ENCODE measurements at regions of chr12 and their contacts with region 1.

Region 1: GRCh38 chr12:49740930-49741881 is at the start of gene TMBIM6:
- DNase-seq: peak; percentile 90
- H3K4me3 ChIP-seq: peak within 1 kb of the TSS; percentile 90 to 94
- H3K27ac ChIP-seq: peak within 1 kb of the TSS; percentile 96 to 98
- H3K4me1 ChIP-seq: peaks cover 13% of the 10 kb centered on the region in 2 experiments
- H3K27me3 ChIP-seq: no peaks in the 10 kb centered on the region
- CTCF ChIP-seq: peak; percentile 94
- EP300 ChIP-seq: no peak
- RAD21 ChIP-seq: peak; percentile 65
- polyA plus RNA-seq, gene TMBIM6: 290 and 360 TPM in 2 replicates

Region 2: GRCh38 chr12:49644620-49644994 is 96.6 kb before region 1 on chr12:
- CTCF ChIA-PET with region 1: interaction called, 22 read pairs
- POLR2A ChIA-PET with region 1: interaction called, 7 read pairs
- DNase-seq: peak; percentile 91
- H3K4me3 ChIP-seq: no peak overlapping the region
- H3K27ac ChIP-seq: peak overlapping the region in 1 of 2 experiments; percentile 6; a peak in 1 of 4 replicates
- H3K4me1 ChIP-seq: peaks cover 0 to 5% of the 10 kb centered on the region in 2 experiments; a peak in 1 of 4 replicates
- H3K27me3 ChIP-seq: no peaks in the 10 kb centered on the region
- CTCF ChIP-seq: peak; percentile 98
- EP300 ChIP-seq: no peak
- RAD21 ChIP-seq: peak; percentile 98

Region 3: GRCh38 chr12:49673446-49674317 is 67.5 kb before region 1 on chr12:
- CTCF ChIA-PET with region 1: interaction called, 10 read pairs
- POLR2A ChIA-PET with region 1: interaction called, 19 read pairs
- DNase-seq: peak; percentile 89
- H3K4me3 ChIP-seq: peak overlapping the region in 1 of 2 experiments; percentile 46; a peak in 2 of 4 replicates
- H3K27ac ChIP-seq: peak overlapping the region; percentile 96 to 98
- H3K4me1 ChIP-seq: peaks cover 34 to 49% of the 10 kb centered on the region in 2 experiments
- H3K27me3 ChIP-seq: no peaks in the 10 kb centered on the region
- CTCF ChIP-seq: peak; percentile 44
- EP300 ChIP-seq: peak; percentile 17 to 43; a peak in 2 of 4 replicates
- RAD21 ChIP-seq: no peak

Region 4: DNA sequence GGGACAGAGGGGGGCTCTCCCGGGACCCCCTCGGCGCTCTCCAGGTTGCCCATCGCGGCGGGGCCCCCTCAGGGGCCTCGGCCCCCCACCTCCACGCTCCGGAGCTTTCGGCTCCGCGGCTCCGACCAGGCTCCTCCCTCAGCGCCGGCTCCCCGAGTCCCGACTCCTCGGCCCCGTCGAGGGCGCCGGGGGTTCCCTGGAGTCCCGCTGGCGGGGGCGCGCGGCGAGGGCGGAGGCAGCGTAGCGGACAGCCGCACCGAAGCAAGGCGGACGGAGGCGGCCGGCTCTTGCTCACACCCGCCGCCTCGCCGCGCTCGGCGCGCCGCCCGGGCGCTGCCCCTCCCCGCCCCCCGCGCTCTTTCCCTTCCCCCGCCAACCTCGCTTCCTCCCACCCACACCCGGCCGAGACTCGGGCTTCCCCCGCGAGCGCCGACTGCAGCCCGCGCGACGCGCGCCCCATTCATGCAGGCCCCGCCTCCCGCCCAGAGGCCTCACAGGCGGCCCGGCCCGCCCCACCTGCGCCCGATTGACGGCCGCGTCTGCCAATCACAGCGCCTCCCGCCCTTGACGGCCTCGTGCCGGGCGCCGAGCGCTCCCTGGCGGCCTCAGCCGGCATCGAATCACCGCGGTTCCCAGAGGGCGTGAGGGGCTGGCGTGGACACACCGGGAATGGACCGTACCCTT is 33.9 kb before region 1 on chr12 and contains the start of gene FMNL3:
- CTCF ChIA-PET with region 1: interaction called, 11 read pairs
- POLR2A ChIA-PET with region 1: interaction called, 12 read pairs
- DNase-seq: peak; percentile 99
- H3K4me3 ChIP-seq: peak within 1 kb of the TSS; percentile 83 to 96
- H3K27ac ChIP-seq: peak within 1 kb of the TSS; percentile 79 to 88
- H3K4me1 ChIP-seq: peaks cover 25 to 28% of the 10 kb centered on the region in 2 experiments; a peak in 3 of 4 replicates
- H3K27me3 ChIP-seq: no peaks in the 10 kb centered on the region
- CTCF ChIP-seq: peak; percentile 93
- EP300 ChIP-seq: 0 out of 4 replicates have a peak, but pooled peaks of 1 of the 2 experiments have one; percentile 25
- RAD21 ChIP-seq: peak; percentile 95
- polyA plus RNA-seq, gene FMNL3: 10.2 and 13.1 TPM in 2 replicates

Region 5: GRCh38 chr12:49763006-49763591 is 21.9 kb after region 1 on chr12:
- CTCF ChIA-PET with region 1: interaction called, 22 read pairs
- POLR2A ChIA-PET with region 1: interaction called, 5 read pairs
- DNase-seq: peak; percentile 72
- H3K4me3 ChIP-seq: no peak overlapping the region
- H3K27ac ChIP-seq: no peak overlapping the region
- H3K4me1 ChIP-seq: no peaks in the 10 kb centered on the region
- H3K27me3 ChIP-seq: no peaks in the 10 kb centered on the region
- CTCF ChIP-seq: peak; percentile 82
- EP300 ChIP-seq: no peak
- RAD21 ChIP-seq: peak; percentile 36

Region 6: DNA sequence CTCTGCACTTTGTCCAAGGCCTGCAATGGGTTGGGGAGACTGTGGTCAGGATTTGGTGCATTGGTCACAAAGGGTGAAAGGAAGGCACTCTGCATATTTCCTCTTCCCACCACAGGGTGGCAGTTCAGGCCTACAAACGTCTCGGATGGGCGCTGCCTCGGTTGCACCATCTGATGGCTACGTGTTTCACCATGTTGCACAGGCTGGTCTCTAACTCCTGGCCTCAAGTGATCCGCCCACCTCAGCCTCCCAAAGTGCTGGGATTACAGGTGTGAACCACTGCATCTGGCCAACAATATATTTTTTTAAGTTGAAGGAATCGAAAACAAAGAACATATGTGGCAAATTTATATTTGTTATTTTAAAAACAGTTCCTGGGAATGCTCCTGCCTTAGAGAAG is 35.2 kb after region 1 on chr12:
- CTCF ChIA-PET with region 1: interaction called, 13 read pairs
- POLR2A ChIA-PET with region 1: no interaction called
- DNase-seq: peak; percentile 79
- H3K4me3 ChIP-seq: peak overlapping the region in 1 of 2 experiments; percentile 9; a peak in 1 of 4 replicates
- H3K27ac ChIP-seq: no peak overlapping the region
- H3K4me1 ChIP-seq: no peaks in the 10 kb centered on the region
- H3K27me3 ChIP-seq: no peaks in the 10 kb centered on the region
- CTCF ChIP-seq: peak; percentile 84
- EP300 ChIP-seq: no peak
- RAD21 ChIP-seq: peak; percentile 91

Region 7: GRCh38 chr12:49828133-49829091 is 87.2 kb after region 1 on chr12 and contains the start of gene NCKAP5L:
- CTCF ChIA-PET with region 1: interaction called, 3 read pairs
- POLR2A ChIA-PET with region 1: interaction called, 14 read pairs
- DNase-seq: peak; percentile 99
- H3K4me3 ChIP-seq: peak within 1 kb of the TSS; percentile 87 to 92
- H3K27ac ChIP-seq: peak within 1 kb of the TSS; percentile 80 to 96
- H3K4me1 ChIP-seq: peaks cover 15 to 29% of the 10 kb centered on the region in 2 experiments; a peak in 3 of 4 replicates
- H3K27me3 ChIP-seq: no peaks in the 10 kb centered on the region
- CTCF ChIP-seq: no peak
- EP300 ChIP-seq: no peak
- RAD21 ChIP-seq: no peak
- polyA plus RNA-seq, gene NCKAP5L: 8.7 and 8.9 TPM in 2 replicates